Adrenal gland (tissue), 19 donors: ENCODE measurements at regions of chr17 and their contacts with region 1.

Region 1: DNA sequence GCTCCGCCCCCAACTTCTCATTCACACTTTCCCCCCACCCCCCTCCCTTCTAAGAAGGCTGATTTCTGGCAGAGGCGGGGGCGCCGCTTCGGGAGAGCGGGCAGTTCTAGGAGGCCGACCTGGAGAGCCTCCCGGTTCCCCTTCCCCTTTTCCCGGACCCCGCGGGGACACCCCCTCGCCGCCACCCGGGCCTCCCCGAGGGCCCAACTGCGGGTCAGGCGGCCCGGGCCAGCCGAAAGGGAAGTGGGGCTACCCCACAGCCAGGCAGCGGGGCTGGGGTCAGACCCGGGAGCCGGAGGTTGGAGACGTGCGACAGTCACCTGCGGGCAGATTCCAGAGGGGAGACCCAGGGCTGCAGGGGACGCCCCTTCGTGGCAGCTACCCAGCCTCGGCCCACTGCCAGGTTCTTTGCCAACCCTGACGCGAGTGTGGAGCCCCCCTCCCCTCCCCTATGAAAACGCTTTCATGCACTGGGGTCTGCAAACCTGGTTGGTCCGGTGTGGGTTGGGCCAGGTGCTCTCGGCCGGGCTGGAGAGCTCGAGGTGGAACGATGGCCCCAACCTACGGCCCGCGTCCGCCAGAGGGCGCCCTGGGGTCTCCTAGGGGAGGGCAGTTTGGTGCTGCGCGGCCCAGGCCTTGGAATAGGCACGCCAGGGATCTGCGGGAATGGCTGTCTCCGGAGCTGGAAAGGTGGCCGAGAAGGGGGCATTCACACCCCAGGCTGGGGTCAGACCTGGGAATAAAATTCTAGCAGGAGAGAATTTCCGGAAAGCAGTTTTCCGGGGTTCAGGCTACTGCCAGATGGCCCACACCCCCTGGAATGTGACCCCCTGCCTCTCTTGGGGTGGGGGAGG is 721 bp upstream of the SOCS3 start:
- DNase-seq: peak; percentile 92 to 97 (median 95)
- H3K4me3 ChIP-seq: peak overlapping the region in 2 of 4 donors; percentile 26 to 96
- H3K27ac ChIP-seq: peak overlapping the region; percentile 69 to 95 (median 83)
- H3K4me1 ChIP-seq: peaks cover 14 to 35% of the 10 kb centered on the region in 2 donors
- H3K27me3 ChIP-seq: no peaks in the 10 kb centered on the region
- CTCF ChIP-seq: peak; percentile 88 to 97 (median 92)
- POLR2A ChIP-seq: no peak

Region 2: GRCh38 chr17:78289802-78290363 is 70.7 kb before region 1 on chr17:
- intact Hi-C with region 1: loop called in 1 of 2 experiments (anchors 5 kb)
- DNase-seq: peak; percentile 74 to 90 (median 85)
- H3K4me3 ChIP-seq: no peak overlapping the region
- H3K27ac ChIP-seq: no peak overlapping the region
- H3K4me1 ChIP-seq: no peaks in the 10 kb centered on the region
- H3K27me3 ChIP-seq: no peaks in the 10 kb centered on the region
- CTCF ChIP-seq: peak; percentile 56 to 95 (median 82)
- POLR2A ChIP-seq: no peak

Region 3: DNA sequence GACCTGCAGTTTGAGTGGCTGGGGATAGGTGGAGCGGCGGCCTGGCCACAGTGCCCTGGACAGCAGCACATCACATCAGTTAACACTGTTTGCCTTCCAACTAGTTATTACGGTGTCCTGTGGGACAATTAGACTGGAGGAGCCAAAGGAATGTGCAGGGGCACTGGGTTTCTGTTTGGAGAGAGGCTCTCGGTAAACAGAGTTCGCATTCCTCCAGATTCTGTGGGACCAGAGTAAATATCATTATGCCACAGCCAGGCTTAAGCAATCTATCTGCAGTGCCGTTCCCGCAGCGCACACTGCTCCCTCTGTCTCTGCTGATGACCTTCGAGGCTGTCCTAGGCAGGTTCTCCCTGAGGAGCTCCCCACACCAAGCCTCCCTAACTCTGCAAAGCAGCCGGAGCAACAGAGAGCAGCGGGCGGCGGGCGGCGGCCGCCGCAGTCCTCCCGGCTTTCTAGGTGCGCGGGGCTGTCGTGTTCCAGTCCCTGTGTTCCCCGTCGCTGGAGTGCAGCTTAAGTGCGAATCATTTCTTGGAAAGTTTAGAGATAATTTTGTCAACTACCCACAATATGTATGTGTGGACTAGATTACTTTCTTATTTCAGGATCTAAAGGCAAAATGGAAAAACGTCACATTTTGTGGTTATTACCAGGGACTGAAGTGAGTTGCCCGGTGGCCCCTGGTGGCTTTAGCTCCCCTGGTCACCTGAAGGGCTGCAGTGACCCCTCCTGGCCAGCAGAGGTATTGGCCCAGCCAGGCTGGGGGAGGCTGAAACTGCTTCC is 61.1 kb after region 1 on chr17:
- intact Hi-C with region 1: loop called (anchors 5 kb)
- DNase-seq: peak; percentile 74 to 85 (median 80)
- H3K4me3 ChIP-seq: no peak overlapping the region
- H3K27ac ChIP-seq: peak overlapping the region in 1 of 5 donors; percentile 40
- H3K4me1 ChIP-seq: peaks cover 0 to 8% of the 10 kb centered on the region in 2 donors
- H3K27me3 ChIP-seq: no peaks in the 10 kb centered on the region
- CTCF ChIP-seq: peak; percentile 97 to 99 (median 98)
- POLR2A ChIP-seq: no peak

Region 4: DNA sequence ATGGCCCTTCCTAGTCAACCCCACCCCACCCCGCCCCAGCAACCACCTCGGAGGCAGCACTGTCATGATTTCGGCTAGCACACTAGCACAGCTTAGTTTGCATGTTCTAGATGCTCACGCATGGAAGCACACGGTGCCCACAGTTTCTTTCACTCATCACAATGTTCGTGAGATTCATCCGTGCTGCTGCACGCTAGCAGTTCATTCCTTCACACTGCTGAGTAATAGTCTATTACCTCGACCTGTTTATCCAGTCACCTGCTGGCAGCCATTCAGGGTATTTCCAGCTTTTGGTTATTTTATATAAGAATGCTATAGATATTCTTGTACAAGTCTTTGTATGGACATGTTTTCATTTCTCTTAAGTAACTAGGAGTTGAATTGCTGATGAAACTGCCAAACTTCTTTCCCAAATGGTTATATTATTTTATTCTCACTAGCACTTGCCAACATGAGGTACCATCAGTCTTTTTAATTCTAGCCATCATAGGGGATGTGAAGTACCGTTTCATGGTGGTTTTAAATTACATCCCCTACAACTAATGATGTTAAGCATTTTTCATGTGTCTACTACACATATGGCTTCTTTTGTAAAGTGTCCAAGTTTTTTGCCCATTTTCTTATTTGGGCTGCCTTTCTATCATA is 345.8 kb after region 1 on chr17:
- intact Hi-C with region 1: no loop called
- DNase-seq: peak in 1 of 7 donors; percentile 48
- H3K4me3 ChIP-seq: no peak overlapping the region
- H3K27ac ChIP-seq: no peak overlapping the region
- H3K4me1 ChIP-seq: peaks cover 0 to 26% of the 10 kb centered on the region in 2 donors
- H3K27me3 ChIP-seq: no peaks in the 10 kb centered on the region
- CTCF ChIP-seq: no peak
- POLR2A ChIP-seq: no peak